Ascending aorta (tissue), 2 donors: ENCODE measurements at regions of chr2 and their contacts with region 1.

Region 1: DNA sequence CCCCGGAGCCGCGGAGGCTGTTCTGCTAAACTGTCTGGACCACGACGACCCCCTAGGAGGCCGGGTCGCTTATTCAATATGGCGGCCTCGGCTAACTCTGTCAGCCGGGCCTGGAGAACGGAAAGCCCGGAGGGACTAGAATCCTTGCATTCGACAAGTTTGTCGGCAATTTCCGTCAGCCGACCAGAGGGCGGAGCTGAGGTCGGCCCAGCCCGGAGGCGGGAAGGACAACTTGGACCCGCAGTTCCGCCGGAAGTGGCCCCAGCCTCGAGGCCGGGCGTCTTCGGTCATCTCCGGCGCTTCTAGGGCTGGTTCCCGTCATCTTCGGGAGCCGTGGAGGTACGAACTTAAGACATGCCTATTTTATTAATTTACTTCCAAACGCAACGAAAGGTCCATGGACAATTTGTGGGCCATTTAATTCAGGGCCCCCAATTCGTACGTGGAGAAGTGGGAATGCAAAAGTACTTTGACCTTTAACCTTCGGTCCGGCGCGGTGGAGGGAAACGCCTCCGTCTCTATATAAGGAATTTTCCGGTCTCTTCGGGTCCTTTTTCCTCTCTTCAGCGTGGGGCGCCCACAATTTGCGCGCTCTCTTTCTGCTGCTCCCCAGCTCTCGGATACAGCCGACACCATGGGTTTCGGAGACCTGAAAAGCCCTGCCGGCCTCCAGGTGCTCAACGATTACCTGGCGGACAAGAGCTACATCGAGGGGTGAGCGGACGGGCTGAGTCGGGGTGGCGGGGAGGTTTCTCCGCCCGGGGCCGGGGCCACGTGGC is at the starts of genes EEF1B2 and NDUFS1:
- DNase-seq: peak; percentile 86 to 98
- H3K4me3 ChIP-seq: peak within 1 kb of the TSS; percentile 77 to 89
- H3K27ac ChIP-seq: peak within 1 kb of the TSS; percentile 92 to 93
- H3K4me1 ChIP-seq: peaks cover 0 to 21% of the 10 kb centered on the region in 2 donors
- H3K27me3 ChIP-seq: no peaks in the 10 kb centered on the region
- CTCF ChIP-seq: no peak
- total RNA-seq, gene EEF1B2: 229 TPM
- total RNA-seq, gene NDUFS1: 16.4 TPM

Region 2: GRCh38 chr2:207710814-207711740 is 1551.5 kb after region 1 on chr2 and contains the start of gene CCNYL1:
- intact Hi-C with region 1: loop called (anchors 5 kb)
- DNase-seq: peak; percentile 95 to 99
- H3K4me3 ChIP-seq: peak within 1 kb of the TSS; percentile 75 to 92
- H3K27ac ChIP-seq: peak within 1 kb of the TSS; percentile 88 to 90
- H3K4me1 ChIP-seq: peaks cover 0 to 6% of the 10 kb centered on the region in 2 donors
- H3K27me3 ChIP-seq: no peaks in the 10 kb centered on the region
- CTCF ChIP-seq: peak; percentile 17 to 55 (median 17)
- total RNA-seq, gene CCNYL1: 12.3 TPM